Activated CD8-positive, alpha-beta T cell treated with anti-CD3 and anti-CD28 coated beads for 36 hours (primary cell): ENCODE measurements at regions of chr19 and their contacts with region 1.

Region 1: DNA sequence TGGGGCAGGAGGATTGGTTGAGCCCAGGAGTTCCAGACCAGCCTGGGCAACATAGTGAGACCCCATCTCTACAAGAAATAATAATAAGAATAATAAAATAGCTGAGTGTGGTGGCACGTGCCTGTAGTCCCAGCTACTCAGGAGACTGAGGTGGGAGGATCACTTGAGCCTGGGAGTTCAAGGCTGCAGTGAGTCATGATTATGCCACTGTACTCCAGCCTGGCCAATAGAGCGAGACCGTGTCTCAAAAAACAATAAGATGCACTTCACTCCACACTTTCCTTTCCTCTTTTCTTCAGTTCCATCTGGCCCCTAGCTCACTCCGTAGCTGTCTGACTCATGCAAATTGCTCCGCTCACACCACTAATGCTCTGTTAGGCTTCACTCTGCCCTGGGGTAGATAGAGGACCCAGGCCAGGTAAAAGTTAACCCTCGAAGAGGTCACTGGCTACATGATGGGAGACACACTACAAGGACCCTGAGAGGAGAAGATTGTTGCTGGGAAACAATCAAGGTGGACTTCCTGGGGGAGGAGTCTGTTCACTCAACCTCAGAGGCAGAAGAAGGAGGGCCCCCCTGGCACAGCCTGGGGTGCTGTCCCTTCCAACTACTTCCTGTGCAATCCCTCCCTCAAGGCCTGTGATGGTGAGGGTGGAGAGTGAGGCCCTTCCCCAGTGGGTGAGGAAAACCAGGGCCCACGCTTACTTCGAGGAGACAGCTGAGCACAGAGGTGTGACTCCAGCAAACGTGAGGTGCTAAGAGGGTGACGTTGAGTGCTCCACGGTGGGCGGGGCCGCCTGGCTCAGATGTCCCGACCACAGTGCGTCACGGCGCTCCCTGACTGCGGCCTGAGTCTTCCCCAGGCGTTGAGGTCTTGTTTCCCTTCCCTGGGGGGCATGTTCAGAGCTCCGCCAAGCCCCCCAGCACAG is 8.8 kb upstream of the TNFSF9 start:
- DNase-seq: peak; percentile 86
- ATAC-seq: peak; percentile 80
- H3K4me3 Mint-ChIP-seq: no peak overlapping the region
- H3K27ac Mint-ChIP-seq: peak overlapping the region; percentile 80
- H3K4me1 Mint-ChIP-seq: peaks cover 34% of the 10 kb centered on the region
- H3K27me3 Mint-ChIP-seq: peaks cover 1% of the 10 kb centered on the region
- CTCF ChIP-seq: no peak

Region 2: DNA sequence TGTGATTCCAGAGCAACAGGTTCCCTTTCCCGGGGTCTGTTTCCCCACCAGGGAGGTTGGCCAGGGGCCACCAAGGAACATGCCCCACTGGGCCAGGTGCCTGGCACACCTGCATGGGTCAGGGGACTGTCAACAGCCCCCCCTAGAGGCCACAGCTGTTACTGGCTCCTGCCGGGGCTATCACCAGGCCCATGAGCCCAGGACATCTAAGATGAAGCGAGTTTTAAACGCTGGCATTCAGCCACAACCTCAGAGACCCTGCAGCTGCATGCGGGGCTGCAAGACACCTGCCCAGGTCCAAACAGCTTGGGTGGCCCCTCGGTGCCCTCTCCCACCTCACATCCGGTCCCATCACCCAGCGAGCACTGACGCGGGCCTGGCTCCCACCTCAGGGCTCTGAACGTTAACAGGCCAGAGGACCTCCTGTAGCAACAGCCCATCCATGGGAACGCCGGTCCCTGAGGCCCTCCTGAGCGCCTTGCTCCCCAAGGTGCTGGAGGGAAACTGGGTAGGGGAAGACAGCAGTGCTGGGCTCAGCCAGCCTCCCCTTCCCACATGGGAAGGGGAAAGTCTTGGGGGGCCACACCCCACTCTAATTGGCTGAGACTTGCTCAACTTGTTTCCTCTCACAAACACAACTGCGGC is 109.4 kb before region 1 on chr19:
- CTCF ChIA-PET with region 1: no interaction called
- POLR2A ChIA-PET with region 1: no interaction called
- intact Hi-C with region 1: no loop called
- DNase-seq: peak; percentile 71
- ATAC-seq: peak; percentile 83
- H3K4me3 Mint-ChIP-seq: no peak overlapping the region
- H3K27ac Mint-ChIP-seq: no peak overlapping the region
- H3K4me1 Mint-ChIP-seq: no peaks in the 10 kb centered on the region
- H3K27me3 Mint-ChIP-seq: no peaks in the 10 kb centered on the region
- CTCF ChIP-seq: peak; percentile 85

Region 3: DNA sequence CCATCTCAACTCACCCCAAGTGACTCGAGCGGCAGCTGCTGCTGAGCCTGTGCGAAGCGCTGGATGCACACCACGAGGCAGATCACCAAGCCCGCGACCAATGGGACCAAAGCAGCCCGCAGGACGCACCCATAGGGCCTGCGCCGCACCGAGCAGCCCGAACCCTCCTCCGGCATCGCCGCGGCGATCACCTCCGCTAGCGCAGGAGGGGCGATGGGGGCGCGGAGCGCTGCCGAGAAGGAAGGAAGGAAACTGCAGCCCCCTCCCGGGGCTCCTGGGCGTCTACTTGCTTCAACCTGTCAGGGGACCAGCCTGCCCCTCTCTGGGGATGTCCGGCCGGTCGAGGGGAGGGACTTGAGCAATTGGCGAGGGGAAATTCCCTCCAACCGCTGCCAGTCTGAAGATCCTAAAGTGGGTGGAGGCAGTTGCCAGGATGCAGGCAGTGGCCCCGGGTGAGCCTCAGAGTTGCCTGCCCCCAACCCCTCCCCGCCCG is 68.9 kb after region 1 on chr19 and contains the start of gene CD70:
- CTCF ChIA-PET with region 1: interaction called, 3 read pairs
- POLR2A ChIA-PET with region 1: interaction called, 3 read pairs
- intact Hi-C with region 1: loop called (anchors 10 kb)
- DNase-seq: peak; percentile 82
- ATAC-seq: peak; percentile 79
- H3K4me3 Mint-ChIP-seq: peak within 1 kb of the TSS; percentile 79
- H3K27ac Mint-ChIP-seq: peak within 1 kb of the TSS; percentile 78
- H3K4me1 Mint-ChIP-seq: peaks cover 67% of the 10 kb centered on the region
- H3K27me3 Mint-ChIP-seq: peaks cover 44% of the 10 kb centered on the region
- CTCF ChIP-seq: no peak
- total RNA-seq, gene CD70: 24.6 to 26.2 TPM